Cardiac septum (tissue), 1 donor: ENCODE measurements at regions of chr3 and their contacts with region 1.

Region 1: DNA sequence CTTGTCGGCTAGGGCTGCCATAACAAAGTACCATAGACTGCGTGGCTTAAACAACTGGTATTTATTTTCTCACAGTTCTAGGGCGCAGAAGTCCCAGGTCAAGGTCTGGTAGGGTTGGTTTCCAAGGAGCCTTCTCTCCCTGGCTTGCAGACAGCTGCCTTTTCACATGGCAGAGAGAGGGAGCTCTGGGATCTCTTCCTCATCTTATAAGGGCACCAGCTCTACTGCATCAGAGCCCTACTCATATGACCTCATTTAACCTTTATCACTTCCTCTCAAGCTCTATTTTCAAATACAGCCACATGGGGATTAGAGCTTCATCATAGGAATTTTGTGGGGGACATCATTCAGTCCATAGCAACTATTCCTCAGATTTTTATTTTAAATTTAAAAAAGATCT is 17.6 kb upstream of the PAQR9 start:
- DNase-seq: no peak

Region 2: DNA sequence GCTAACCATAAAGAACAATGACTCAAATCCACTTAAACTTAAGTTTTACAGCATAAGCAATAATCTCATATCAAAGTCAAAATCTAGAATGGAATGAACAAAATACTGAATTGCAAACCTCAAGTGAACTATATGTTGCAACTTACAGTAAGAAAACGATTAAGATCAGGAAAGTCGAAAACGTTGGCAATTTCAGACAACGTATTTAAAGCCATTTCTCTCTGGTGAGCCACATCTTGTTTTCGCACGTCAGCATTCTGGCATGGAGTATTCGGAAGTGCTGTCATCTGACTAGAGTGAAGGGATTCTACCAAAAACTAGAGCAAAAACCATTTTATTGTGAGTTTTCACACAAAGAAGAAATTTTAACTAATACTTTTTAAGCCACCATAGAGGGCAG is 431.1 kb before region 1 on chr3:
- intact Hi-C with region 1: no loop called
- DNase-seq: no peak

Region 3: GRCh38 chr3:142929109-142929508 is 52.0 kb before region 1 on chr3:
- intact Hi-C with region 1: loop called (anchors 5 kb)
- DNase-seq: no peak

Region 4: DNA sequence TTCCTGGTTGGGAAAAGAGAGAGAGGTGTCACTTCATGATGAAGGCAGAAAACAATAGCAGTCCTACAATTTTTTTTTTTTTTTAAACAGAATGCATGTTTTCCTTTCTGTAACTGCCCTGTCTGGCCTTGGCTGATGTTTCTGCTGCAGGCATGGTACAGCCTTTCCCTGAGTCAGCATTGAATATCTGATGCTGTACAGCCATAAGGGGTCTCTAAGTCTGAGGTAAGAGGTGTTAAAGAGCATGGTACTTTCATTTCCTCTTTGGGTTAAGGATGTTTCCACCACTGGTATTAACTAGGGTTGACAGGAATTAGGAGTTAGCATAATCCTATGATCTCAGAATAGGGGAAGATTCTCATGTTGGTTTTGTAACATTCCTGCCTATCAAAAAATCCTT is 285.8 kb after region 1 on chr3:
- intact Hi-C with region 1: no loop called
- DNase-seq: no peak